ENCODE measurements at regions of chr16 and their contacts with region 1.

Region 1: GRCh38 chr16:29664091-29664921 is 1.3 kb downstream of the SPN start:
- DNase-seq: peak; percentile 49
- H3K4me3 Mint-ChIP-seq: peak overlapping the region; percentile 95
- H3K27ac Mint-ChIP-seq: peak overlapping the region; percentile 91
- H3K4me1 Mint-ChIP-seq: peaks cover 50% of the 10 kb centered on the region
- H3K27me3 Mint-ChIP-seq: no peaks in the 10 kb centered on the region

Region 2: GRCh38 chr16:29641561-29641960 is 22.7 kb before region 1 on chr16:
- CTCF ChIA-PET with region 1: interaction called, 5 read pairs
- POLR2A ChIA-PET with region 1: interaction called, 37 read pairs
- DNase-seq: no peak
- H3K4me3 Mint-ChIP-seq: peak overlapping the region; percentile 39
- H3K27ac Mint-ChIP-seq: peak overlapping the region; percentile 81
- H3K4me1 Mint-ChIP-seq: peaks cover 45% of the 10 kb centered on the region
- H3K27me3 Mint-ChIP-seq: no peaks in the 10 kb centered on the region

Region 3: GRCh38 chr16:29675811-29676643 is 11.7 kb after region 1 on chr16:
- CTCF ChIA-PET with region 1: interaction called, 3 read pairs
- POLR2A ChIA-PET with region 1: interaction called, 11 read pairs
- DNase-seq: no peak
- H3K4me3 Mint-ChIP-seq: no peak overlapping the region
- H3K27ac Mint-ChIP-seq: peak overlapping the region; percentile 11
- H3K4me1 Mint-ChIP-seq: peaks cover 28% of the 10 kb centered on the region
- H3K27me3 Mint-ChIP-seq: no peaks in the 10 kb centered on the region

Region 4: DNA sequence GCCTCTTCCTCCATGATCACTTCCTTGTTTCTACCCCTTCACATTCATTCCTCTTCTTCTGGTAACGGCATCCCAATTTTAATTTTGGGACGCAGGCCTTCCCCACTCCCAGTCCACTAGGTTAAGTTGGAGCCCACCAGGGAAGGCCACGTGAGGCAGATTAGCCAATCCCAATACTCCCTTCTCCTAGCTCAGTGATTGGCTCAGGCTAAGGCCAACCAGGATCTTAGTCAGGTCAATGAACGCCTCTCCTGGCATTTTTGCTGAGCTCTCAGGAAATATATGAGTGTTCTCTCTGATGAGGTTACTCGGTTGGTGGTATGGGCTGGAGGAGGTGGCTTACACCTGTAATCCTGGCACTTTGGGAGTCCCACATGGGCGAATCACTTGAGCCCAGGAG is 219.7 kb after region 1 on chr16:
- CTCF ChIA-PET with region 1: no interaction called
- POLR2A ChIA-PET with region 1: no interaction called
- DNase-seq: no peak
- H3K4me3 Mint-ChIP-seq: no peak overlapping the region
- H3K27ac Mint-ChIP-seq: no peak overlapping the region
- H3K4me1 Mint-ChIP-seq: no peaks in the 10 kb centered on the region
- H3K27me3 Mint-ChIP-seq: peaks cover 8% of the 10 kb centered on the region

Measured in activated CD4-positive, alpha-beta memory T cell treated with anti-CD3 and anti-CD28 coated beads, Interleukin-2, amount 10 ng/mL, durations not matched to agents 7 days and 5 days (primary cell).